HepG2 (cell line): ENCODE measurements at regions of chr17 and their contacts with region 1.

Region 1: DNA sequence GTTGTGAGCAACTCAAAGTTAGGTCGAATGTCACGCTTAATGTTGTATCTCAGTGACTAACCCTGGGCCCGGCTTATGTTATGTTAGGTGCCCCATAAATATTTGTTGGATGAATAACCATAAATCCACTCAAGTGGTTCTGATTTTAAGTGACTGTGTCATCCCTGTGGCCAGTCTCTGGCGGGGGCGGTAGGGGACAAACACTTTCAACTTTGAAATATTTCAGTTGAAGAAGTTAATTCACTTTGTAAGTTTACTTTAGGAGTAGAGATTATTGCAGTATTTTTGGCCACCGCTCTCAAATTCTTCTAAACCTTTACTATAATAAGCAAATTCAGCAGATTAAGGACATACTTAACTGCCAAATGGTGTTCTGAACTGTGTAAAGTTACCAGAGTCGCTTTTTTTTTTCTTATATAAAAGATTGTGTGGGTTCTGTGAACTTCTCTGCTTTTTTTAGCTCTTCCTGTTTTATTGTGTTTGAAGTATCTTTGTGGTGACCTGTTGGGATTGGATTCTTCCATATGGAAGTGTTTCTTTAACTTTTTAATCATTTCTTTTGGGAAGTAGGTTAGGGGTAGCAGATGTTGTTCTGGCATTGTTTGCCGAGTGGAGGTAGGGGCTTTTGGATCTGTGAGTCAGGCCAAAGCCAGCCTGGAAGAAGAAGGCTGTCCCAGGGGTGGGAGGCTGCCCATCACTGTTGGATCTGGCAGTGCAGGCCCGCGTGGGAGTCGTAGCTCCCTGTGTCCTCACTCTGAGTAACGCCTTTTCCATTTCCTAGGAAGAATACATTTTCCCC is 61.4 kb upstream of the TBX2 start:
- DNase-seq: peak; percentile 50
- ATAC-seq: no peak
- H3K4me3 ChIP-seq: no peak overlapping the region
- H3K27ac ChIP-seq: no peak overlapping the region
- H3K4me1 ChIP-seq: peaks cover 82% of the 10 kb centered on the region
- H3K27me3 ChIP-seq: no peaks in the 10 kb centered on the region
- CTCF ChIP-seq: no peak
- EP300 ChIP-seq: no peak
- POLR2A ChIP-seq: no peak
- RAD21 ChIP-seq: no peak

Region 2: DNA sequence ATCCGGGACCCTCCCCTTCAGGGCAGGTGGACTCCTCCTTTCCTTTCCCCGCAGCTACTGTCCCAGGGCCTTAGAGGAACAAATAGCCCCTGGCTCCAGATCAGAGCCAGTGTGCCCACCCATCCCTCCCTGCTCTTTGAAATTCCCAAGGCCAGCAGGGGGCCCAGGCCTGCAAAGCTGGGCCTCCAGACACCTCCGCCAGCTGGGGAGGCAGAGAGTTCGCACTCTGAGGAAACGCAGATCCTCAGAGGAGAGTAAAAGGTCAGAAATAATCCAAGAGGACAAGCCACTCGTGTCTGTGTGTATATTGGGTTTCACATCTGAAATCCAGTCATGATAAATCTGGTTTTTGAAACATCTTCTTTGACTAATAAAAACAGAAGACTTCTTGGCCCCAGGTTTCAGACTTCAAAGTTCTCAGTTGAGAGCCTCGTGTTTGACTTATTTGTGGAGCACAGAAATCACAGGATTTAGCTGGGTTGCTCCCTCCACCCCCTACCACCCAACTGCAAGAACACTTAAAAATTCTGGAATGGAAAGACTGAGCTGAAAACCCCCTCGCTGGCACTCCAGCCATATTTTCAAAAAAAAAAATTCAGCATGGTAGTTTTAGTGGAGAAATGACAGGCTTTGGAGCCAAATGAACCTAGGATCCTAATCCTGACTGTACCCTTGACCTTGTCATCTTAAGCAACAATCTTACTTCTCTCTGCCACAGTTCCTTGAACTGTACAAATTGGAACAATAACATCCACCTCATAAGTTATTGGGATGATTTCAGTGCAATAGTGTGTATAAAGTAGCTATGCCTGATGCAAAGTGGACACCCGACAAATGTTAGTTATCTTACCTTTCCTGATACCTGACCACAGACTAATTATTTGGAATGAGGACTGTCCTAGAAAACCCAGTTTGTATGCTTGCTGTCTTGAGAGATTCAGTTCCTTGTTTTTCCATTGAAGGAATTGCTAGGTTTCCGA is 17.0 kb after region 1 on chr17:
- CTCF ChIA-PET with region 1: no interaction called
- POLR2A ChIA-PET with region 1: interaction called, 29 read pairs
- in situ Hi-C with region 1: no loop called
- intact Hi-C with region 1: no loop called
- DNase-seq: no peak
- ATAC-seq: peak; percentile 23; the same call in 1 of the 3 replicates
- H3K4me3 ChIP-seq: no peak overlapping the region
- H3K27ac ChIP-seq: no peak overlapping the region
- H3K4me1 ChIP-seq: peaks cover 87% of the 10 kb centered on the region
- H3K27me3 ChIP-seq: no peaks in the 10 kb centered on the region
- CTCF ChIP-seq: peak; percentile 48
- EP300 ChIP-seq: no peak
- POLR2A ChIP-seq: no peak
- RAD21 ChIP-seq: no peak

Region 3: DNA sequence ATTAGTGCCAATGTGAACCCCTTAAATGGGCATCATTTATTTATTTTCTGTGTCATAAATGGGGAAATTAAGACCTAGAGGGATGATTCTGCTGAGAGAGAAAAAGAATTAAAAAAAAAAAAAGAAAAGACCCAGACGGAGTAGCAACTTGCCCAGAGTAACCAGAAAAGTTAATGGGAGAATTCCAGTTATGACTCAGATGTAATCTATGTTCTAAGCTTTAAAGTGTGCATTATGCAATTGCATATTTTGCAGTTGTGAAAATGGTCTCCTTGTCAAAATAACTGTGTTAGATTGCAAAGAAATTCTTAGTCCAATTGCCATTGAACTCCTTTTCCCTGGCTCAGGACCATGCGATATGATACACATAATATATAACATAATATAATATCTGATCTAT is 22.9 kb after region 1 on chr17:
- CTCF ChIA-PET with region 1: no interaction called
- POLR2A ChIA-PET with region 1: interaction called, 29 read pairs
- in situ Hi-C with region 1: no loop called
- intact Hi-C with region 1: loop called (anchors 2 kb)
- DNase-seq: peak; percentile 66
- ATAC-seq: no peak
- H3K4me3 ChIP-seq: no peak overlapping the region
- H3K27ac ChIP-seq: no peak overlapping the region
- H3K4me1 ChIP-seq: peaks cover 99% of the 10 kb centered on the region
- H3K27me3 ChIP-seq: no peaks in the 10 kb centered on the region
- CTCF ChIP-seq: no peak
- EP300 ChIP-seq: peak in 1 of 2 experiments; percentile 63; a peak in 2 of 4 replicates
- POLR2A ChIP-seq: no peak
- RAD21 ChIP-seq: no peak

Region 4: GRCh38 chr17:61366715-61367413 is 28.7 kb after region 1 on chr17:
- CTCF ChIA-PET with region 1: no interaction called
- POLR2A ChIA-PET with region 1: interaction called, 24 read pairs
- in situ Hi-C with region 1: no loop called
- intact Hi-C with region 1: loop called (anchors 2 kb)
- DNase-seq: peak; percentile 96
- ATAC-seq: peak; percentile 75
- H3K4me3 ChIP-seq: peak overlapping the region in 1 of 3 experiments; percentile 39; a peak in 2 of 6 replicates
- H3K27ac ChIP-seq: peak overlapping the region; percentile 89
- H3K4me1 ChIP-seq: peaks cover 85% of the 10 kb centered on the region
- H3K27me3 ChIP-seq: no peaks in the 10 kb centered on the region
- CTCF ChIP-seq: no peak
- EP300 ChIP-seq: peak; percentile 54 to 80; a peak in 1 of 4 replicates
- POLR2A ChIP-seq: 0 out of 4 replicates have a peak, but pooled peaks of 1 of the 2 experiments have one; percentile 23
- RAD21 ChIP-seq: no peak; the same call in 1 of the 2 replicates

Region 5: GRCh38 chr17:61389670-61390478 is 51.7 kb after region 1 on chr17:
- CTCF ChIA-PET with region 1: no interaction called
- POLR2A ChIA-PET with region 1: interaction called, 15 read pairs
- in situ Hi-C with region 1: no loop called
- intact Hi-C with region 1: no loop called
- DNase-seq: no peak
- ATAC-seq: peak; percentile 52
- H3K4me3 ChIP-seq: peak overlapping the region in 1 of 3 experiments; percentile 21; a peak in 1 of 6 replicates
- H3K27ac ChIP-seq: no peak overlapping the region
- H3K4me1 ChIP-seq: peaks cover 66% of the 10 kb centered on the region
- H3K27me3 ChIP-seq: no peaks in the 10 kb centered on the region
- CTCF ChIP-seq: peak; percentile 99
- EP300 ChIP-seq: 0 out of 4 replicates have a peak, but pooled peaks of 1 of the 2 experiments have one; percentile 13
- POLR2A ChIP-seq: no peak
- RAD21 ChIP-seq: peak; percentile 95

Region 6: DNA sequence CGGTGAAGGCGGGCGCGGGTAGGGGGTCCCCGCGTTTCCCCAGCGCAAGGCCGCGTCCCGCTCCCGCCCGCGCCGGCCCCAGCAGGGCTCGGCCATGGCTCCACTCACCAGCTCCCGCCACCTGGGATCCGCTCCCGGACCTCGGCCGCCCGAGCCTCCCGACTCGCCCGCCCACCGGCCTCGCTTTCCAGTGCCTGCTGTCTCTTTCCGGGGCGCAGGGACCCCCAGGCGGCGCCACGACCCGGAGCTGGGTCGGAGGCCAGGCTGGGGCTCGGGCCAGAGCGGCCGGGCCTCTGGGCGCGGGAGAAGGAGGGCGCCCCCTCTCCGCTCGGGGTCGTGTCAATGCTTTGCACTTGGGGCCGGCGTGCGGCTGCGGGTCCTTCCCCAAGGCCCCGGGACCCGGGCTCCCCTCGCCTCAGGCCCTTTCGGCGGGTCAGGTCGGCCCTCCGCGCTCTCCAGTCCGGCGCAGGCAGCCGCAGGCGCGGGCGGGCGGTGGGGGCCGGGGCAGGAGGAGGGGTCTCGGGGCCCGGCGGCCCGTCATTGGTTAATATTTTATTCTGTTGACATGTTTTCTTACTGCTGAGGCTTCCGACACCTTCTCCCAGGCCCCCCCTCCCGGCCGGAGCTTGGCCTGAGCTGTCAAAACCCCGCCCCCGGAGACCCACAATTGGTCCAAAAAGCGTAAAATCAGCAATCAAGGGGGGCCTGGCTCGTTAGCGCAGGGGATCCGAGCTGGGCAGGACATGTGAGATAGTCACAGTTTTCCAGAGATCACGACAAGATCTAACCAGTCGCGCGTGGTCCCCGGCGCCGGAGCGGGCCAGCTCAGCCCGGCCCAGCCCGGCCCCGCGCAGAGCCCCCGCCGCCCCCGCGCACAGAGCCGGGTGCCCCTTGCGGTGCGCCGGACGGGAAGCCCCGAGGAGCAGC is 61.2 kb after region 1 on chr17 and contains the start of gene TBX2:
- CTCF ChIA-PET with region 1: no interaction called
- POLR2A ChIA-PET with region 1: interaction called, 15 read pairs
- in situ Hi-C with region 1: no loop called
- intact Hi-C with region 1: no loop called
- DNase-seq: peak; percentile 80
- ATAC-seq: peak; percentile 74
- H3K4me3 ChIP-seq: peak within 1 kb of the TSS; percentile 72 to 93 (median 86)
- H3K27ac ChIP-seq: peak within 1 kb of the TSS; percentile 81
- H3K4me1 ChIP-seq: peaks cover 46% of the 10 kb centered on the region
- H3K27me3 ChIP-seq: no peaks in the 10 kb centered on the region
- CTCF ChIP-seq: peak; percentile 53
- EP300 ChIP-seq: peak in 1 of 2 experiments; percentile 5; a peak in 1 of 4 replicates
- POLR2A ChIP-seq: peak; percentile 26 to 70; a peak in 3 of 4 replicates
- RAD21 ChIP-seq: peak; percentile 67; the same call in 1 of the 2 replicates
- total RNA-seq, gene TBX2: 10.2 and 15.3 TPM in 2 replicates

Region 7: DNA sequence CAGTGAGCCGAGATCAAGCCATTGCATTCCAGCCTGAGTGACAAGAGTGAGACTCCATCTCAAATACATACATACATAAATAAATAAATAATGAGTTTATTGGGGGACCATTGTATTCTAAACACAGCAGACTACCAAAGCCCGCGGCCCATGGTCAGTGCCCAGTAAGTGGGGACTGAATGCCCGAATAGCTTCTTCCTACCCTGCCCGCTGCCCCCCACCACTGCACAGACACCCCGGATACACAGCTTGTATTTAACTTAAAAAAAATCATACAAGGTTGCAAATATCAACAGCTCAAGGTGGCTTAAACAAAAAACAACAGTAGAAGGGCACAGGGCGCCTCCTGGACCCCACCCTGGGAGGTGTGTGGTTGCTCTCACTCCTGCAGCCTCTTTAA is 1117.8 kb after region 1 on chr17:
- CTCF ChIA-PET with region 1: no interaction called
- POLR2A ChIA-PET with region 1: no interaction called
- in situ Hi-C with region 1: no loop called
- intact Hi-C with region 1: no loop called
- DNase-seq: no peak
- ATAC-seq: no peak
- H3K4me3 ChIP-seq: no peak overlapping the region
- H3K27ac ChIP-seq: no peak overlapping the region
- H3K4me1 ChIP-seq: no peaks in the 10 kb centered on the region
- H3K27me3 ChIP-seq: no peaks in the 10 kb centered on the region
- CTCF ChIP-seq: no peak
- EP300 ChIP-seq: no peak
- POLR2A ChIP-seq: no peak
- RAD21 ChIP-seq: no peak